ENCODE measurements at regions of chr5 and their contacts with region 1.

Region 1: DNA sequence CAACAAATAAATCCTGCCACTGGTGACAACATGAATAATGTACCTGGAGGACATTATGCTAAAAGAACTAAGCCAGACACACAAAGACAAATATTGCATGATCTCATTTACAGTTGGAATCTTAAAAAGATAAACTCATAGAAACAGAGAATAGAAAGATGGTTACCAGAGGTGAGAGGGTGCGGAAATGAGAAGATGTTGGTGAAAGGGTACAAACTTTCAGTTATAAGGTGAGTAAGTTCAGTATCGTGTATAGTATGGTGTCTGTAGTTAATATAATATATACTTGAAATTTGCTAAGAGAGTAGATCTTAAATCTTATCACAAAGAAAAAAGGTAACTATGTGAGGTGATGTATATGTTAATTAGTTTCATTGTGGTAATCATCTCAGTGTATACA is 63.3 kb downstream of the PRRC1 start:
- DNase-seq: no peak
- ATAC-seq: no peak
- H3K4me3 ChIP-seq: no peak overlapping the region
- H3K27ac ChIP-seq: no peak overlapping the region
- H3K4me1 ChIP-seq: peaks cover 8% of the 10 kb centered on the region in 2 donors
- H3K27me3 ChIP-seq: no peaks in the 10 kb centered on the region
- CTCF ChIP-seq: no peak
- POLR2A ChIP-seq: no peak

Region 2: DNA sequence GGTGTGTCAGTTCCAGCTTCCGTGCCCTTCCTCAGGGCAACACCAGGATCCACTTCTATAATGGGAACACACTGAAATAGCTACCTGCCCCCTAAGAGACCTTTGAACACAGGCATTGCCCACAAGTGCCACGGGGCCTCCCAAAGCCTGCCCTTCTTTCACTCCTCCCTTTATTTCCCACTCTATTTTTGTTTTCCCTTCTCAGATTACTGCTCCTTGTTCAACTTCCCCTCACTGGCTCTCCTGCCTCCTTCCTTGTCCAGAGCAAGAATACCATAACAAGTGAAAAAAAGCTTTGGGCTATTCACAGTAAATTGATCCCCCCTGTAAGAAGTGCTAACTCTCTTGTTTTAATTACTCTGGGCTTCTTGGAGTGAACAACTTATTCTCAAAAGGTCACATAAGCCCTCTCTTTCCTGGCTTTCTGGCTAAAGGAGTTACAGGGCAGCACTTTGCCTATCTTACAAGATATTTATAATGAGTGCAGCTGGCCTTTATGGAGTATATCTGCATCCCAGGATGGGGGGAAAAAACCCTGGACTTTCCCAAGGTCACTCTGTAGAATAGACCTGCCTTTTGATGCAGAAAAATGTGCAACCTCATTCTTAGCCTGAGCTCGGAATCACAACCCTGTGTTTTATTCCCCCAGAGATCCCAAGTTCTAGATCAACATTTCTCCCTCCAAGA is 79.5 kb after region 1 on chr5:
- in situ Hi-C with region 1: no loop called
- intact Hi-C with region 1: loop called (anchors 5 kb)
- DNase-seq: peak; percentile 33 to 51
- ATAC-seq: peak; percentile 88 to 97
- H3K4me3 ChIP-seq: no peak overlapping the region
- H3K27ac ChIP-seq: peak overlapping the region; percentile 79 to 82 (median 80)
- H3K4me1 ChIP-seq: peaks cover 25 to 46% of the 10 kb centered on the region in 2 donors
- H3K27me3 ChIP-seq: no peaks in the 10 kb centered on the region
- CTCF ChIP-seq: no peak
- POLR2A ChIP-seq: peak in 1 of 2 donors; percentile 8

Region 3: GRCh38 chr5:127697894-127698600 is 117.3 kb after region 1 on chr5:
- in situ Hi-C with region 1: no loop called
- intact Hi-C with region 1: loop called (anchors 5 kb)
- DNase-seq: no peak
- ATAC-seq: no peak
- H3K4me3 ChIP-seq: no peak overlapping the region
- H3K27ac ChIP-seq: peak overlapping the region in 3 of 4 donors; percentile 12 to 89 (median 87)
- H3K4me1 ChIP-seq: peaks cover 31 to 36% of the 10 kb centered on the region in 2 donors
- H3K27me3 ChIP-seq: no peaks in the 10 kb centered on the region
- CTCF ChIP-seq: no peak
- POLR2A ChIP-seq: no peak

Region 4: DNA sequence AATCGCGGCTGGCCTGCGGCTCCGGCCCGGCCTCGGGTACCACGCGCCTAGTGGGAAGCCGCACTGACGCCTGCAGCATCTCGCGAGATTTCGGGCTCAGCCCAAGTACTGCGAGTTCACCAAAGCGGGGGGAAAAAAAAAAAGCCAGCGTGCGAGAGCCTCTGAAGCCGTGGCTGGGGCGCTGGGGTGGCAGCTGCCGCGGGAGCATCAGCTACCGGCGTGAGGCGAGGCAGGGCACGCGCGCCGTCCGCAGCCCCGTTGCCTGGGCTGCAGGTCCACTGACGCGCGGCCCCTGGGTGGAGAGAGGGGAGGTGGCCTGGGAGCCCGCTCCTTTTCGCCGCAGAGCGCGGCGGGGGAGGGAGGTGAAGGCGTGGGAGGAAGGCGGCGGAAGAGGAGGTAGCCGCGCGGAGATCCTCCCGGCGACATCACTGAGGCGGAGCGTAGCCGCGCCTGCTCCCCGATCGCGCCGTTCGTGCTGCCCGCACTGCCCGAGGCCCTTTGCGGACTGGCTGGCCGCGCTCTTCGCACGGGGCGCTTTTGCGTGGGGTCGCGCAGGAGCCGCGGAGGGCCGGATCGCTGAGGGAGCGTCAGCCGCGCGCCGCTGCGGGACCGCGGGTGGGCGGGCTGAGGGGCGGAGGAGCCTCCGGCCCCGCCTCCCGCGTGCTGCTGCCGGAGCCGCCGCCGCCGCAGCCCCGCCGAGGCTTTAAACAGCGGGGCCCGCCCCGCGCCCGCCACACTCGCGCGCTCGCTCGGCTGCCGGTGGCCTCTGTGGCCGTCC is 502.5 kb after region 1 on chr5 and contains the start of gene SLC12A2:
- in situ Hi-C with region 1: no loop called
- intact Hi-C with region 1: loop called (anchors 5 kb)
- DNase-seq: peak; percentile 90 to 91
- ATAC-seq: peak; percentile 80 to 81
- H3K4me3 ChIP-seq: peak within 1 kb of the TSS; percentile 79 to 88 (median 84)
- H3K27ac ChIP-seq: peak within 1 kb of the TSS; percentile 93 to 99 (median 99)
- H3K4me1 ChIP-seq: peaks cover 40 to 61% of the 10 kb centered on the region in 2 donors
- H3K27me3 ChIP-seq: no peaks in the 10 kb centered on the region
- CTCF ChIP-seq: peak in 1 of 5 experiments; percentile 8
- POLR2A ChIP-seq: peak; percentile 88 to 97
- total RNA-seq, gene SLC12A2: 11.6 to 21.0 (median 17.2) TPM